Left lung (tissue), 14 donors: ENCODE measurements at regions of chr16 and their contacts with region 1.

Region 1: DNA sequence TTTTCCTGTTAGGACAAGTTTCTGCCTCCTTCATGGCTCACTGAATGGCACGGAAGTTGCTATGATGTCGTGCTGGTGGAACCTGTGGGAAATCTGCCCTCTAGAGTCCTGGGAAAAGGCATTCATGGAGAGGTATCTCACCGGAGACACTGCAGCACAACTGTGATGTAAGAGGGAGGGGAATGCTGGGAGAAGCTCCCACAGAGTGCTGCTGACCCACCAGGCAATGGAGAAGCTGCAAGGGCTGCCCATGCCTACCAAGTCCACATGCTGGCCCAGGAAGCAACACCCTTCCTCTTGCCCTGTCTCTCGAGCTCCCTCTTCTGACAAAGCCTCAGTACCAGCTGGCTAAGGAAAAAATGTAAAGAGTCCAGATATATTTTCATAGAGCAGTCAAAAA is 45.2 kb upstream of the SLC5A11 start:
- DNase-seq: no peak
- ATAC-seq: peak; percentile 29
- H3K4me3 ChIP-seq: no peak overlapping the region
- H3K27ac ChIP-seq: no peak overlapping the region
- H3K4me1 ChIP-seq: no peaks in the 10 kb centered on the region
- H3K27me3 ChIP-seq: no peaks in the 10 kb centered on the region
- CTCF ChIP-seq: no peak

Region 2: GRCh38 chr16:24568392-24568791 is 232.2 kb before region 1 on chr16:
- intact Hi-C with region 1: loop called in 1 of 2 experiments (anchors 10 kb)
- DNase-seq: no peak
- ATAC-seq: no peak
- H3K4me3 ChIP-seq: no peak overlapping the region
- H3K27ac ChIP-seq: no peak overlapping the region
- H3K4me1 ChIP-seq: no peaks in the 10 kb centered on the region
- H3K27me3 ChIP-seq: no peaks in the 10 kb centered on the region
- CTCF ChIP-seq: peak in 1 of 2 donors; percentile 25